Head of caudate nucleus (tissue), 42 donors: ENCODE measurements at regions of chr1 and their contacts with region 1.

Region 1: DNA sequence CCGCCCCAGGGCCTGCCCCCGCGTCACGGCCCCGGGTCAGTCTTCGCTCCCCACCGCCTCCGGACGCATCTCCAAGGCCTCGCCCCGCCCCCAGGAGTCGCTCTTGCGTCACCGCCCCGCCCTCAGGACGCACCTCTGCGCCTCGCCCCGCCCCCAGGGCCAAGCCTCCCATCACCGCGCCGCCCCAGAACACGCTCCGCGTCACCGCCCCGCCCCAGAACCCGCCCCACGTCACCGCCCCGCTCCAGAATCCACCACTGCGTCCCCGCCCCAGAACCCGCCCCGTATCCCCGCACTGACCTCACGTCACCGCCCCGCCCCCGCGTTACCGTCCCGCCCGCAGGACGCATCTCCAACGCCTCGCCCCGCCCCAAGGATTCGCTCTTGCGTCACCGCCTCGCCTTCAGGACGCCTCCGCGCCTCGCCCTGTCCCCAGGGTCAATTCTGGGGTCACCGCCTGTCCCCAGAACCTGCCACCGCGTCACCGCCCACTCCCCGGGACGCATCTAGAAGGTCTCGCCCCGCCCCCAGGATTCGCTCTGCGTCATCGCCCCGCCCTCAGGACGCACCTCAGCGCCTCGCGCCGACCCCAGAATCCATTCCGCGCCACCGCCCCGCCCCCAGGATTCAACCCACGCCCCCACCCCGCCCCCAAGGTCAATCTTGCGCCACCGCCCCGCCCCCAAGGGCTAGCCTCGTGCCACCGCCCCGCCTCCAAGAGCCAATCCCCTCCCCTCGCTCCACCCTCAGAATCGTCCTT is 448 bp upstream of the CASP9 start:
- DNase-seq: peak; percentile 99 to 100 (median 100)

Region 2: GRCh38 chr1:15559294-15559761 is 34.9 kb after region 1 on chr1:
- intact Hi-C with region 1: no loop called
- DNase-seq: no peak

Region 3: GRCh38 chr1:15617175-15617880 is 92.9 kb after region 1 on chr1 and contains the start of gene DDI2:
- intact Hi-C with region 1: loop called (anchors 2 kb)
- DNase-seq: peak; percentile 83 to 98 (median 94)

Region 4: GRCh38 chr1:15803354-15803753 is 278.9 kb after region 1 on chr1:
- intact Hi-C with region 1: no loop called
- DNase-seq: peak in 3 of 42 donors; percentile 28 to 45 (median 32)